ENCODE measurements at regions of chr20 and their contacts with region 1.

Region 1: GRCh38 chr20:2523919-2524708 is 12.3 kb upstream of the TMC2 start:
- H3K4me3 Mint-ChIP-seq: peak overlapping the region; percentile 89
- H3K27ac Mint-ChIP-seq: peak overlapping the region; percentile 98
- H3K4me1 Mint-ChIP-seq: peaks cover 19% of the 10 kb centered on the region
- H3K27me3 Mint-ChIP-seq: peaks cover 38% of the 10 kb centered on the region

Region 2: GRCh38 chr20:2470423-2471193 is 53.5 kb before region 1 on chr20 and contains the start of gene SNRPB:
- intact Hi-C with region 1: loop called (anchors 2 kb)
- H3K4me3 Mint-ChIP-seq: peak within 1 kb of the TSS; percentile 97
- H3K27ac Mint-ChIP-seq: peak within 1 kb of the TSS; percentile 98
- H3K4me1 Mint-ChIP-seq: peaks cover 41% of the 10 kb centered on the region
- H3K27me3 Mint-ChIP-seq: no peaks in the 10 kb centered on the region

Region 3: GRCh38 chr20:2578475-2579192 is 54.5 kb after region 1 on chr20:
- intact Hi-C with region 1: no loop called
- H3K4me3 Mint-ChIP-seq: no peak overlapping the region
- H3K27ac Mint-ChIP-seq: no peak overlapping the region
- H3K4me1 Mint-ChIP-seq: peaks cover 4% of the 10 kb centered on the region
- H3K27me3 Mint-ChIP-seq: peaks cover 44% of the 10 kb centered on the region

Region 4: DNA sequence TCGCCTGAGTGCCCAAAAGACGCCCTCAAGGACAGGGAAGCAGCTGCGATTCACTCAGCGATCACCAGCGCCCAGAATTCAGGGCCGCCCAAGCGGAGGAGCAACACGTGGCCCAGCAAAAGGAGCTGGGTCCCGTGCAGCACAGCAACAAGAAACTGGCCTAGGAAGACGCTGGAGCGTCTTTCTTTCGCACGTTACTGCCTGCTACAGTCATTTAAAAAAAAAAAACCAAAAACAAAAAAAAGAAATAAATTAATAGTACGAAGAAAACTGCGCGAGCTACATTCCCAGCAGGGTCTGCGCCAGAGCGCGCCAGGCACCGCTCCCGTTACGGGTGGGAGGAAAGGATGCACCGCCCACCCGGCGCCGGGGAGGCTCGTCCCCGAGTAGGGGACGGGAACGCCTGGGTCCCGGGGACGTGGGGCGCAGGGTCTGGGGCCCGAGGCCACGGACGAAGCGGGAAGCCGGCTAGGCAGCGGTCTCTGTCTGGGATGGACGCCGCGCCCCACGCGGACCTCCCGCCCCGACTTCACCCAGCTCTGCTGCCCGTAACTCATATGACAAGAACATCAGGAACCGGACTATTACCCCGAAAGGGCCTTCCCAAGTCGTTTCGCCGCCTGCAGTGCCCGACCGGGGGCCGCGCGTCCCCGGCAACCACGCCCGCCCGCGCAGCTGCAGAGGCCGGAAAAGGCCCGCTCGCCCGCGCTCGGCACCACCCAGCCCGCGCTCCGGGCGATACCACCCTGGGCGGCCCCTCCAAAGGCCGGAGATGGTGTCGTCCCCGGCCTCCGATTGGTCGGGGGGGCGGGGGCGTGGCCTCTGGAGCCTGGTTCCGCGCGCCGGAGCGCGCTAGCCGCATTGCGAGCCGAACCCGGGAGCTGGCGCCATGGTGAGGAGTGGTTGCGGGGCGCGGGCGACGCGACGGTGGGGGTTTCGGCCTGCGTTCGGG is 127.9 kb after region 1 on chr20 and contains the start of gene NOP56:
- intact Hi-C with region 1: loop called (anchors 2 kb)
- H3K4me3 Mint-ChIP-seq: peak within 1 kb of the TSS; percentile 90
- H3K27ac Mint-ChIP-seq: peak within 1 kb of the TSS; percentile 95
- H3K4me1 Mint-ChIP-seq: peaks cover 35% of the 10 kb centered on the region
- H3K27me3 Mint-ChIP-seq: no peaks in the 10 kb centered on the region

Measured in dendritic cell treated with granulocyte-macrophage colony-stimulating factor and Interleukin-4, amounts not matched to agents 40 ng/mL and 50 ng/mL, for 4 days (primary cell).